ENCODE measurements at regions of chr11 and their contacts with region 1.

Region 1: DNA sequence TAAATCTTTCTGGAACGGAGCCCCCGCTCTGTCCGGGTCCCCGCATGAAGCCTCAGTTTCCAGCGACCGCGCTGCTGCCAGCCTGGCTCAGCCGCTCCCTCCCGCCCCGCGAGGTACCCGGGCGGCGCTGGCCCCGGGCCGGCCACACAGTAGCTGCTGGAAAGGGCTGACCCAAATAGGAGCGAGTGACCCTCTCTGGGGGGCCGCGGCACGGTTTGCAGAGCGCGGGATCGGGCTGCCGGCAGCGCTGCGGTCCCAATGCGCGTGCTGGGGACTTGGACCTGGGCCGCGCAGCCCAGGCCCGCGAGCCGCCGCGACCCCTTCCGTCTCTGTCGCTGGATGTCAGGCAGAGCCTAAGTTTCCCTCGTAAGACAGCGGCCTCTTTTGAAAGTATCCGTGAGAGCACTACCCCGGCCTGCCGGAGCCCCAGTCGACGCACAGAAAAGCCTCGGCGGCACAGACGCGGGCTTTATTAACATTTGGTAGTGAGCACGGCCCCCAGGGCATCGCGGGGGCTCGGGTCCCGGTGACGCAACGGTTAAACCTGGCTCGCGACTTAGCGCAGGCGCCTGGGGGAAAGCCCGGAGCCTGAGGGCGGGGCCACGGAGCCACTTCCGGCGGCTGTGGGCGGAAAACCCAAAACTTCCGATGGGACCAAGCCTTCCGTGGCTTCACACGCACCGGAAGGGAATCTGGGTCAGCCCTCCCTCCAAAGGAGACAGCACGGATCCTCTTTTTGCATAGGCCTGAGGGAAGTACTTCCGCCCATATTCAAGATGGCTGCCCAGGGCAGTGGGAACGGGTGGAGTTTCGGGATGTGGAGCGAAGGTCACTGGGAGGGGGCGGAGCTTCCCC is 14.9 kb downstream of the BAD start:
- DNase-seq: peak; percentile 99
- H3K4me3 ChIP-seq: peak overlapping the region; percentile 85
- H3K4me3 Mint-ChIP-seq: peak overlapping the region; percentile 89
- H3K27ac Mint-ChIP-seq: peak overlapping the region; percentile 95
- H3K4me1 ChIP-seq: peaks cover 21% of the 10 kb centered on the region
- H3K4me1 Mint-ChIP-seq: peaks cover 17% of the 10 kb centered on the region
- H3K27me3 ChIP-seq: no peaks in the 10 kb centered on the region
- H3K27me3 Mint-ChIP-seq: no peaks in the 10 kb centered on the region
- CTCF ChIP-seq: no peak

Region 2: GRCh38 chr11:64246871-64247728 is 22.5 kb before region 1 on chr11 and contains the start of gene PPP1R14B:
- CTCF ChIA-PET with region 1: interaction called, 13 read pairs
- POLR2A ChIA-PET with region 1: interaction called, 22 read pairs
- intact Hi-C with region 1: loop called (anchors 1 kb)
- DNase-seq: peak; percentile 92 to 95
- H3K4me3 ChIP-seq: peak within 1 kb of the TSS; percentile 91
- H3K4me3 Mint-ChIP-seq: peak within 1 kb of the TSS; percentile 97
- H3K27ac Mint-ChIP-seq: peak within 1 kb of the TSS; percentile 90
- H3K4me1 ChIP-seq: peaks cover 32% of the 10 kb centered on the region
- H3K4me1 Mint-ChIP-seq: peaks cover 20% of the 10 kb centered on the region
- H3K27me3 ChIP-seq: no peaks in the 10 kb centered on the region
- H3K27me3 Mint-ChIP-seq: no peaks in the 10 kb centered on the region
- CTCF ChIP-seq: no peak
- total RNA-seq, gene PPP1R14B: 162 and 185 TPM in 2 replicates

Region 3: GRCh38 chr11:64284048-64284961 is 14.7 kb after region 1 on chr11 and contains the start of gene BAD:
- CTCF ChIA-PET with region 1: interaction called, 15 read pairs
- POLR2A ChIA-PET with region 1: interaction called, 10 read pairs
- intact Hi-C with region 1: loop called (anchors 1 kb)
- DNase-seq: peak; percentile 95 to 97
- H3K4me3 ChIP-seq: peak within 1 kb of the TSS; percentile 74
- H3K4me3 Mint-ChIP-seq: peak within 1 kb of the TSS; percentile 82
- H3K27ac Mint-ChIP-seq: peak within 1 kb of the TSS; percentile 91
- H3K4me1 ChIP-seq: peaks cover 5% of the 10 kb centered on the region
- H3K4me1 Mint-ChIP-seq: peaks cover 14% of the 10 kb centered on the region
- H3K27me3 ChIP-seq: no peaks in the 10 kb centered on the region
- H3K27me3 Mint-ChIP-seq: no peaks in the 10 kb centered on the region
- CTCF ChIP-seq: no peak
- total RNA-seq, gene BAD: 50.5 and 51.6 TPM in 2 replicates